B cell (primary cell): ENCODE measurements at regions of chr13 and their contacts with region 1.

Region 1: GRCh38 chr13:46553886-46554858 is 1.2 kb downstream of the LRCH1 start:
- DNase-seq: peak; percentile 88
- ATAC-seq: peak; percentile 56
- H3K4me3 ChIP-seq: peak overlapping the region; percentile 87 to 97 (median 95)
- H3K4me3 Mint-ChIP-seq: peak overlapping the region; percentile 95
- H3K27ac ChIP-seq: peak overlapping the region; percentile 89 to 95
- H3K27ac Mint-ChIP-seq: peak overlapping the region; percentile 93
- H3K4me1 ChIP-seq: peaks cover 32 to 34% of the 10 kb centered on the region in 2 donors
- H3K4me1 Mint-ChIP-seq: peaks cover 55% of the 10 kb centered on the region
- H3K27me3 ChIP-seq: no peaks in the 10 kb centered on the region
- H3K27me3 Mint-ChIP-seq: no peaks in the 10 kb centered on the region
- CTCF ChIP-seq: peak; percentile 35

Region 2: DNA sequence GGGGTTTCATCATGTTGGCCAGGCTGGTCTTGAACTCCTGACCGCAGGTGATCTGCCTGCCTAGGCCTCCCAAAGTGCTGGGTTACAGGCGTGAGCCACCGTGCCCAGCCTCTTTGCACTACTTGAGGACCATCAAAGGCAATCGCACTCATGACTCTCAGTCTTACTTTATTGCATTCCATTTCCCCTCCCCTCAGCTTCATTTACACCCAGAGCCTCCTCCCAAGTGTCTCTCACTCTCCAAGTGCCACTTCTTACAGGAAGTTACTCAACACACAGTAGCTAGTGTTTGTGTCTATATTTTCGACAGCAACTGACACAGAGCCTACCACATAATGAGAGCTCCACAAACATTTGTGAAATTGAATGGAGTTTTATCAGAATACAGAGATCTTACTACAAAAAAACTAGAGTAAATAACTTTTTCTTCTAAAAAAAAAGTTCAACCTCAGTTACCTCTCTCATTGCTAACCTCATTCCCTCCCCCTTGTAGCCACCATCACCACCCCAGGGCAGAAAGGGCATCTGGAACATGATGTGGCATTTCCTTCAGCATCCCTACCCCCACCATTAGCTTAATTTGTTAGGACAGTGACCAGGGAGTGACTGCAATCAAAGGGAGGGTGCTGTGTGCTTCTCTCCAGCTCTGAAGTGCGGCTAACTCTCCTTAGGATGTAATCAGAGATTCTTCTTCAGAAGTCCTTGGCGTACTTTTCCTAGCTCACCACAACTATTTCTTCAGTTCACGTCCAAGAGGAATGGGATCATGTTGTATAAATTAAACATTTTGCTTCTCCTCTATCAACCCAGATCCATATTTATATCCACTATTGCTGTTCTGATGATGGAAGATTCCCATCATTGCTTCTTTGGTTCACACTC is 150.1 kb before region 1 on chr13:
- CTCF ChIA-PET with region 1: no interaction called
- POLR2A ChIA-PET with region 1: no interaction called
- intact Hi-C with region 1: no loop called
- DNase-seq: no peak
- ATAC-seq: no peak
- H3K4me3 ChIP-seq: no peak overlapping the region
- H3K4me3 Mint-ChIP-seq: peak overlapping the region; percentile 5
- H3K27ac ChIP-seq: peak overlapping the region in 1 of 2 donors; percentile 8
- H3K27ac Mint-ChIP-seq: peak overlapping the region; percentile 37
- H3K4me1 ChIP-seq: peaks cover 45 to 54% of the 10 kb centered on the region in 2 donors
- H3K4me1 Mint-ChIP-seq: peaks cover 55% of the 10 kb centered on the region
- H3K27me3 ChIP-seq: no peaks in the 10 kb centered on the region
- H3K27me3 Mint-ChIP-seq: no peaks in the 10 kb centered on the region
- CTCF ChIP-seq: no peak

Region 3: DNA sequence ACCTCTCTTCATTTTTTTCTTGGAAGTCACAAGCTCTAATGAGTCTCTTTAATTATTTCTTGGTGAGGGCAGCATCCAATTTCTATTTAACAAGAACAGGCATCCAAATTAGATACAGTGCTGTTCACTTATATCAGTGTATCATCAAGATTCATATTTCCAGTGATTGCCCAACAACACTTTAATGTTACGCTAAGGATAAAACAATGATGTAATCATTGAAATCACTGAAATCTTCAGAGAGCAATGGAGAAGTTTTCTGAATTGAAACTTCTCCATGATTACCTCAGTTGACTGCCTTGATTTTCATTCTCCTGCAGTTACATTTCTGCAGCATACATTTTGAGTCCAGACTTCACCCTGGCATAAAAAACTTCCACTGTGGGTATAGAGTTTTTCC is 18.3 kb before region 1 on chr13:
- CTCF ChIA-PET with region 1: interaction called, 13 read pairs
- POLR2A ChIA-PET with region 1: no interaction called
- intact Hi-C with region 1: no loop called
- DNase-seq: no peak
- ATAC-seq: no peak
- H3K4me3 ChIP-seq: no peak overlapping the region
- H3K4me3 Mint-ChIP-seq: no peak overlapping the region
- H3K27ac ChIP-seq: no peak overlapping the region
- H3K27ac Mint-ChIP-seq: no peak overlapping the region
- H3K4me1 ChIP-seq: no peaks in the 10 kb centered on the region
- H3K4me1 Mint-ChIP-seq: no peaks in the 10 kb centered on the region
- H3K27me3 ChIP-seq: no peaks in the 10 kb centered on the region
- H3K27me3 Mint-ChIP-seq: peaks cover 2% of the 10 kb centered on the region
- CTCF ChIP-seq: no peak

Region 4: DNA sequence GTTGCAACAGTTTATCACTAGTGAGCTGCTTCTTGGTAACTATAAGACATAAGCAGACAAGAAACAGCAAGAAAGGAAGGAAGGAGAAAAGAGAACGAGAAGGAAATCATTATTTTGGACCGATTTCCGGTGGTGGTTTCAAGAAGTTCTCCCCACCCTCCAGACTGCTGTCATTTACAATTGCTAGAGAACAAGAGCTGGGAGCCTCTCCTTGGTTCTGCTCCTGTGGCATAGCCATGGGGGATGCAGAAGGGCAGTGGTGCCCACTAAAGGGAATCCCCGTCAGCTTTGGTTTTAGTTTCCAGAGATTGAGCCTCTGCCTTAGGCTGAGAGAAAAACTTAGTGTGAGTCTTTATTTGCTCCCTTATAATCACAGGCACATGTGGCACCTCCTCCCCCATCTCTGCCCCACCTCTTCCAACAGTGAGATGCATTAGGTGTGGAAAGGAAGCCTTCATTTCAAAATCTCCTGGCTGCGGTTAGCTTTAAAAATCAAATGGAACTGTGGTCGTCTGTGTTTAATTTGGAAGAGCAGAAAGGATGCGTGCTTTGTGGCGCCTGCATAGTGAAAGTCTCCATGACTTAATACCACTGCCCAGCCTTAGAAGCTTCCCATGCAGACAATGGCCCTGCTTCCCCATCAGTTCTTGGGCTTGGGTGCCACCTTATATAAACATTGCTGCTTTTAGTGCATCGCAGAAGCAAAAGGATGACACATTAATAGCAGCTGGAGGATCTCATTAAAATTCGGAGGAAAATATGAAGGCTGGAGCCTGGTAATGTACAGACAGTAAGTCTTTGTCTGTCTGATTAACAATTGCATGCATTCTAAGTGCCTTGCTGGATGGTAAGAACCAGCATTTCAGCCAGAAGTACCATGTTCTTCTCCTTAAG is 23.8 kb after region 1 on chr13:
- CTCF ChIA-PET with region 1: interaction called, 30 read pairs
- POLR2A ChIA-PET with region 1: interaction called, 5 read pairs
- intact Hi-C with region 1: loop called (anchors 2 kb)
- DNase-seq: peak; percentile 47
- ATAC-seq: peak; percentile 25
- H3K4me3 ChIP-seq: peak overlapping the region in 1 of 5 experiments; percentile 45
- H3K4me3 Mint-ChIP-seq: peak overlapping the region; percentile 61
- H3K27ac ChIP-seq: peak overlapping the region; percentile 43 to 68
- H3K27ac Mint-ChIP-seq: peak overlapping the region; percentile 73
- H3K4me1 ChIP-seq: peaks cover 72 to 75% of the 10 kb centered on the region in 2 donors
- H3K4me1 Mint-ChIP-seq: peaks cover 86% of the 10 kb centered on the region
- H3K27me3 ChIP-seq: no peaks in the 10 kb centered on the region
- H3K27me3 Mint-ChIP-seq: no peaks in the 10 kb centered on the region
- CTCF ChIP-seq: no peak

Region 5: DNA sequence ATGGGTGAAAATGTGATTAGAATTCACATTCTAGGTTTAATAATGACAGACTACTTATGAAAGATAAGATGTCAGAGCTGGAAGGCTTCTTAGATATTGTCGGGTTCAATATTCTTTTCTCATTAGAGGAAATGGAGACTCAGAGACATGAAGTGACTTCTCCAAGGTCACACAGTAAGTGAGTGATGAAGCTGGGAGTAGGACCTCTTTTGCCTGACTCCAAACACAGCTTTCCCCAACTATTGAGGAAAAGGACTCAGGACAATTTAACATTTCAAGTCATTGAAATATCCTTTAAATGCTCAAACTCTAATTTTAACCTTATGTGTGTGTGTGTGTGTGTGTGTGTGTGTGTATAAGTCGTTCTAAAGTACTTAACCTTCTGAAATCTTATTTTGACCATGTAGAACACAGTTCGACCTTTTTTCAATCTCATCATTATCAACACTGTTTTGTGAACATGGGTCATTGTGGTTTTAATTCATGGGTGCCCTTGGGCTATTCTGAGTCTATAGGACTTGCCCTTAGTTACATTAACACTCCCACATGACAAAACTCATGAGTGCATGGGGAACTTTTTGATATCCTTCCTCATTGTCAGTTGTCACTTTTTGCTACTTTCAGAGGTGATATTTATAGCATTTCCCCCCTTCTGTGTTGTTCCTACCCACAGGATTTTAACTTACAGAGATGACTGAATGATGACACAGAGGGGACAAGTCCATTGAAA is 51.8 kb after region 1 on chr13:
- CTCF ChIA-PET with region 1: interaction called, 10 read pairs
- POLR2A ChIA-PET with region 1: interaction called, 10 read pairs
- intact Hi-C with region 1: no loop called
- DNase-seq: peak; percentile 72
- ATAC-seq: peak; percentile 44
- H3K4me3 ChIP-seq: peak overlapping the region in 1 of 5 experiments; percentile 18
- H3K4me3 Mint-ChIP-seq: peak overlapping the region; percentile 66
- H3K27ac ChIP-seq: peak overlapping the region; percentile 26 to 74
- H3K27ac Mint-ChIP-seq: peak overlapping the region; percentile 79
- H3K4me1 ChIP-seq: peaks cover 76 to 80% of the 10 kb centered on the region in 2 donors
- H3K4me1 Mint-ChIP-seq: peaks cover 89% of the 10 kb centered on the region
- H3K27me3 ChIP-seq: no peaks in the 10 kb centered on the region
- H3K27me3 Mint-ChIP-seq: no peaks in the 10 kb centered on the region
- CTCF ChIP-seq: no peak

Region 6: GRCh38 chr13:46668302-46668720 is 114.1 kb after region 1 on chr13:
- CTCF ChIA-PET with region 1: interaction called, 25 read pairs
- POLR2A ChIA-PET with region 1: interaction called, 3 read pairs
- intact Hi-C with region 1: loop called (anchors 1 kb)
- DNase-seq: no peak
- ATAC-seq: peak; percentile 26
- H3K4me3 ChIP-seq: peak overlapping the region; percentile 36 to 69 (median 58)
- H3K4me3 Mint-ChIP-seq: peak overlapping the region; percentile 87
- H3K27ac ChIP-seq: peak overlapping the region; percentile 81 to 89
- H3K27ac Mint-ChIP-seq: peak overlapping the region; percentile 82
- H3K4me1 ChIP-seq: peaks cover 41 to 42% of the 10 kb centered on the region in 2 donors
- H3K4me1 Mint-ChIP-seq: peaks cover 68% of the 10 kb centered on the region
- H3K27me3 ChIP-seq: no peaks in the 10 kb centered on the region
- H3K27me3 Mint-ChIP-seq: no peaks in the 10 kb centered on the region
- CTCF ChIP-seq: no peak

Region 7: DNA sequence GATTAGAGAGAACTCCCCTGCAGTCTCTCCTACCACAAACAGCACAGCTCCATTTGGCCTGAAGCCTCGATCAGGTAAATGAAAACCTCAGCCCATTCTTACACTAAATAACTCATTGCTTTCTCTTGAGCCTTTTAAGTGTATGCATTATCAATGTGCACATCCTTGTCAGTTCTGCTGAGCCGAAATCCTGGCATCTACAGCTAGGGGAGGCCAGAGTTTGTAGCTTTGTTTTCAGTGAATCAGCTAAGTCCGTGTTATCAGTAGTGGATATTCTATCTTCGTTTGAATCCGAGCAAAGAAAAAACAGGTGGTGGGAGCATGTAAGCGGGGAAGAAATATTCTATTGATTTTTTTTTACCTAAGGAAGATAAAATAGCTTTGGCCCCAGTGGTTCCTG is 158.4 kb after region 1 on chr13:
- CTCF ChIA-PET with region 1: interaction called, 139 read pairs
- POLR2A ChIA-PET with region 1: no interaction called
- intact Hi-C with region 1: no loop called
- DNase-seq: no peak
- ATAC-seq: no peak
- H3K4me3 ChIP-seq: no peak overlapping the region
- H3K4me3 Mint-ChIP-seq: no peak overlapping the region
- H3K27ac ChIP-seq: no peak overlapping the region
- H3K27ac Mint-ChIP-seq: no peak overlapping the region
- H3K4me1 ChIP-seq: no peaks in the 10 kb centered on the region
- H3K4me1 Mint-ChIP-seq: peaks cover 3% of the 10 kb centered on the region
- H3K27me3 ChIP-seq: no peaks in the 10 kb centered on the region
- H3K27me3 Mint-ChIP-seq: no peaks in the 10 kb centered on the region
- CTCF ChIP-seq: no peak

Region 8: GRCh38 chr13:47117268-47117667 is 563.1 kb after region 1 on chr13:
- CTCF ChIA-PET with region 1: no interaction called
- POLR2A ChIA-PET with region 1: no interaction called
- intact Hi-C with region 1: no loop called
- DNase-seq: no peak
- ATAC-seq: no peak
- H3K4me3 ChIP-seq: no peak overlapping the region
- H3K4me3 Mint-ChIP-seq: no peak overlapping the region
- H3K27ac ChIP-seq: no peak overlapping the region
- H3K27ac Mint-ChIP-seq: no peak overlapping the region
- H3K4me1 ChIP-seq: no peaks in the 10 kb centered on the region
- H3K4me1 Mint-ChIP-seq: no peaks in the 10 kb centered on the region
- H3K27me3 ChIP-seq: no peaks in the 10 kb centered on the region
- H3K27me3 Mint-ChIP-seq: peaks cover 3% of the 10 kb centered on the region
- CTCF ChIP-seq: no peak